PC-9 (cell line): ENCODE measurements at regions of chr1 and their contacts with region 1.

Region 1: GRCh38 chr1:181117638-181118449 is 29.3 kb downstream of the IER5 start:
- DNase-seq: peak; percentile 95 to 100
- H3K4me3 ChIP-seq: peak overlapping the region; percentile 37; the same call in 1 of the 2 replicates
- H3K27ac ChIP-seq: peak overlapping the region; percentile 99
- H3K4me1 ChIP-seq: peaks cover 95% of the 10 kb centered on the region
- H3K27me3 ChIP-seq: no peaks in the 10 kb centered on the region
- CTCF ChIP-seq: no peak

Region 2: GRCh38 chr1:181073638-181074037 is 44.2 kb before region 1 on chr1:
- CTCF ChIA-PET with region 1: no interaction called
- POLR2A ChIA-PET with region 1: no interaction called
- intact Hi-C with region 1: loop called (anchors 5 kb)
- DNase-seq: peak; percentile 66 to 93
- H3K4me3 ChIP-seq: no peak overlapping the region
- H3K27ac ChIP-seq: no peak overlapping the region
- H3K4me1 ChIP-seq: peaks cover 32% of the 10 kb centered on the region
- H3K27me3 ChIP-seq: no peaks in the 10 kb centered on the region
- CTCF ChIP-seq: no peak

Region 3: DNA sequence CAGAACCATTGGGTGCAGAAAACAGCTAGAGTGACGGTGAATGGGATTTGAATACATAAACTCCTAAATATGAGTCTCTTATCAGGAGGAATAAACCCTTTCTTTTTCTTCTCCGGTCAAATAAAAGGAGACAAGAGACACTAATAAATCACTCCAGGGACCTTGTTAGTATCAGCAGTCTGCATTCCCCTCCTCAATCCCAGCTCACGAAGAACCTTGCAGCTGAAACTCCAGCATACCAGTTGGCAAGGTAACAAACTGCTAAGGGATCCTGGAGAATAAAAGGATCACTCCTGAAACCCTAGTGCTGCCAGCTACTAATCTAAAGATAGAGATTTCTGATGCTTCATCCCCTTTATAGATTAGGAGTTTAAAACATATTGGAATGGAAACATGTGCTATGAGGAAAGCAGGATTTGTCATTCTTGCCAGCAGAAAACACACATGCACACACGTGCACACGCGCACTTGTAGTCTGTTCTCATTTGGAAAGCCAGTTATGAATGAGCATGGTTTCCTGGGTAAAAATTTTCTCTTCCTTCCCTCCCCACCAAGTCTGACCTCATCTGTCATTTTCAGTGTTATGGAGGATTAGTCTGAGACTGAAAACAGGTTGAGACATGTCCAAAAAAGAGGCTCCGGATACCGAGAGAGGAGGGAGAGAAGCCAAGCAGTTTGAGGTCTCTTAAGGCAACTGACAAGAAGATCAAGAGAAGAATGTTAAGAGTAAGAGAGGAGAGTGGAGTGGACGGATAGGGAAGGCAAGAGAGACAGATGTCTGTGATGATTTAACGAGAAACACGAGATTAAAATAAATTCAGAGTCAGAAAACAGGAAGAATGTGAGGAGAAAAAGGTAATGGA is 18.5 kb before region 1 on chr1:
- CTCF ChIA-PET with region 1: interaction called, 3 read pairs
- POLR2A ChIA-PET with region 1: interaction called, 7 read pairs
- intact Hi-C with region 1: loop called (anchors 1 kb)
- DNase-seq: peak in 1 of 2 experiments; percentile 11
- H3K4me3 ChIP-seq: no peak overlapping the region
- H3K27ac ChIP-seq: peak overlapping the region; percentile 96
- H3K4me1 ChIP-seq: peaks cover 68% of the 10 kb centered on the region
- H3K27me3 ChIP-seq: no peaks in the 10 kb centered on the region
- CTCF ChIP-seq: no peak

Region 4: GRCh38 chr1:181105134-181106021 is 12.5 kb before region 1 on chr1:
- CTCF ChIA-PET with region 1: interaction called, 4 read pairs
- POLR2A ChIA-PET with region 1: interaction called, 52 read pairs
- intact Hi-C with region 1: loop called (anchors 1 kb)
- DNase-seq: peak; percentile 69 to 94
- H3K4me3 ChIP-seq: peak overlapping the region; percentile 64
- H3K27ac ChIP-seq: peak overlapping the region; percentile 96
- H3K4me1 ChIP-seq: peaks cover 70% of the 10 kb centered on the region
- H3K27me3 ChIP-seq: no peaks in the 10 kb centered on the region
- CTCF ChIP-seq: no peak

Region 5: GRCh38 chr1:181134543-181135362 is 16.9 kb after region 1 on chr1:
- CTCF ChIA-PET with region 1: interaction called, 7 read pairs
- POLR2A ChIA-PET with region 1: interaction called, 9 read pairs
- intact Hi-C with region 1: loop called (anchors 1 kb)
- DNase-seq: peak; percentile 84 to 92
- H3K4me3 ChIP-seq: peak overlapping the region; percentile 26; the same call in 1 of the 2 replicates
- H3K27ac ChIP-seq: peak overlapping the region; percentile 92
- H3K4me1 ChIP-seq: peaks cover 71% of the 10 kb centered on the region
- H3K27me3 ChIP-seq: no peaks in the 10 kb centered on the region
- CTCF ChIP-seq: no peak

Region 6: GRCh38 chr1:181541947-181542346 is 424.1 kb after region 1 on chr1:
- CTCF ChIA-PET with region 1: no interaction called
- POLR2A ChIA-PET with region 1: no interaction called
- intact Hi-C with region 1: no loop called
- DNase-seq: no peak
- H3K4me3 ChIP-seq: no peak overlapping the region
- H3K27ac ChIP-seq: no peak overlapping the region
- H3K4me1 ChIP-seq: no peaks in the 10 kb centered on the region
- H3K27me3 ChIP-seq: peaks cover 19% of the 10 kb centered on the region
- CTCF ChIP-seq: no peak